ENCODE measurements at regions of chr6 and their contacts with region 1.

Region 1: DNA sequence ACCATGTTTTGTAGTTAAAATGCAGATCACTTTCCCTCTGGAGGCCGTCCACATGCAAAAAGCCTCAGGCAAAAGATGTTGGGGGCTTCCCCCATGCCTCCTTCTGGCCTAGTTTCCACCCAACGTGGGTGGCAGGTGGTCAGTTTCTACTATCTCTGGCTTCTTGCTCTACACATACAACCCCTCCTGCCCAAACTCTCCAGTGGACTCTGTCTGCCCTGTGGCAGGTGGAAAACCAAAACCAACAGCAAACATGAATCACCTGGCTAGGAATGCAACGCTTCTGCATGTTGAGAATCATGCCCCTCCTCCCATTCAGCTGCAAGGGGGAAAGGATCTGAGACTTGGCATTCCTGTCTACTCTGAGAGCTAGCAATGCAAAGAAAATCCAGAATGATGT is 94.8 kb downstream of the MBOAT1 start:
- DNase-seq: no peak
- H3K4me3 ChIP-seq: no peak overlapping the region
- H3K27ac ChIP-seq: no peak overlapping the region
- H3K4me1 ChIP-seq: peaks cover 0 to 2% (median 0%) of the 10 kb centered on the region in 4 experiments; a peak in 2 of 7 replicates
- H3K27me3 ChIP-seq: no peaks in the 10 kb centered on the region
- CTCF ChIP-seq: no peak
- EP300 ChIP-seq: no peak
- POLR2A ChIP-seq: no peak
- RAD21 ChIP-seq: no peak

Region 2: GRCh38 chr6:19824058-19824807 is 293.2 kb before region 1 on chr6:
- CTCF ChIA-PET with region 1: no interaction called
- POLR2A ChIA-PET with region 1: no interaction called
- DNase-seq: no peak
- H3K4me3 ChIP-seq: no peak overlapping the region
- H3K27ac ChIP-seq: no peak overlapping the region
- H3K4me1 ChIP-seq: no peaks in the 10 kb centered on the region
- H3K27me3 ChIP-seq: no peaks in the 10 kb centered on the region
- CTCF ChIP-seq: no peak
- EP300 ChIP-seq: no peak
- POLR2A ChIP-seq: no peak
- RAD21 ChIP-seq: no peak

Region 3: DNA sequence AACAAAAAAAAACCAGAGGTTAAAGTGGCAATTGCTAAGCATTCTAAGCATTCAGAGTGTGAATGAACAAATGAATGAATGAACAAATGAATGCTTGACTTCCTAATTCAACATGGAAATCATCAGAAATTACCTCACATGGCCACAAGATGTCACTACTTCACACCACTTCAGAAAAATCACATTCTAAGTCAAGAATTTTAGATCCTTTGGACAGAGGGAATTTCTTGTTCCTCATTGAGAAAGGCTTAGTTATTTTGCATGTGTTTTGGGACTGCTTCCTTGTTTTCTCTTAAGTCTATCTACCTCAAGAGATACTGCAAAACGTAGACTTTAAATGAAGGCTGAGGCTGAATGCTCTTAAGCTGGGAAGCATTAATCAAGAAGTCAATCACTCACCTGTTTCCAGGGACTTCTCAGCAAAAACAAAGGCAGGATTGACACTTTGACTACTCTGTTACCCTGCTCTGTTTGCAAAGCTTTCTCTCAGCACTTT is 25.4 kb before region 1 on chr6:
- CTCF ChIA-PET with region 1: interaction called, 11 read pairs
- POLR2A ChIA-PET with region 1: no interaction called
- DNase-seq: no peak
- H3K4me3 ChIP-seq: no peak overlapping the region
- H3K27ac ChIP-seq: no peak overlapping the region
- H3K4me1 ChIP-seq: peaks cover 0 to 3% (median 0%) of the 10 kb centered on the region in 4 experiments; a peak in 2 of 7 replicates
- H3K27me3 ChIP-seq: no peaks in the 10 kb centered on the region
- CTCF ChIP-seq: peak in 2 of 3 experiments; percentile 32 to 73; a peak in 2 of 4 replicates
- EP300 ChIP-seq: no peak
- POLR2A ChIP-seq: no peak
- RAD21 ChIP-seq: peak; percentile 76 to 80

Region 4: DNA sequence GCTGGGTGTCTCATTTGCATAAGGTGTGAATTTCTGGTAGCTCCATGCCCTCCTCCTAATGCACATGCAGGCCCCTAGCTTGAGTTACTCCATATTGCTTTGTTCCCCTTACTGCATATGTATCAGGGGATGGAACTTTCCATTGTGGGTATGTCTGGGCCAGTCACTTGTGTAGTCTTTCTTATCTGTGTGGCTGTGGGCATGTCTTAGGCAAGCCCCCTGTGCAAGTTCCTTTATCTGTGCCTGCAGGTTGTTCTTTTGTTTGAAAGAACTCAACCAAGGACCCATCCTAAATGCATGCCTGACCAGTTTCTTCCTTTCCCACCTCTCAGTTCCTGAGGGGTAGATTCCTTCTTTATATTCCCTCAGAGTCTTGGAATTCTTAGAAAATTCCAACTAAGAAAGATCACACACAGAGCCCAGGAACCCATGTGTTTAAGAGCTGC is 71.2 kb after region 1 on chr6:
- CTCF ChIA-PET with region 1: no interaction called
- POLR2A ChIA-PET with region 1: no interaction called
- DNase-seq: no peak
- H3K4me3 ChIP-seq: no peak overlapping the region
- H3K27ac ChIP-seq: no peak overlapping the region
- H3K4me1 ChIP-seq: peaks cover 0 to 4% (median 0%) of the 10 kb centered on the region in 4 experiments; a peak in 3 of 7 replicates
- H3K27me3 ChIP-seq: no peaks in the 10 kb centered on the region
- CTCF ChIP-seq: no peak
- EP300 ChIP-seq: no peak
- POLR2A ChIP-seq: no peak
- RAD21 ChIP-seq: no peak